ENCODE measurements at regions of chr14 and their contacts with region 1.

Region 1: GRCh38 chr14:89767861-89768268 is 186.7 kb downstream of the EFCAB11 start:
- DNase-seq: peak; percentile 43
- ATAC-seq: peak; percentile 92
- H3K4me3 ChIP-seq: no peak overlapping the region
- H3K27ac ChIP-seq: no peak overlapping the region
- H3K4me1 ChIP-seq: no peaks in the 10 kb centered on the region
- H3K27me3 ChIP-seq: peaks cover 9% of the 10 kb centered on the region; the same call in 1 of the 2 replicates
- CTCF ChIP-seq: peak; percentile 57 to 82 (median 75); a peak in 5 of 6 replicates
- POLR2A ChIP-seq: no peak
- RAD21 ChIP-seq: peak; percentile 87

Region 2: GRCh38 chr14:89237921-89238529 is 529.8 kb before region 1 on chr14:
- CTCF ChIA-PET with region 1: no interaction called
- POLR2A ChIA-PET with region 1: no interaction called
- RAD21 ChIA-PET with region 1: no interaction called
- intact Hi-C with region 1: loop called (anchors 10 kb)
- DNase-seq: no peak
- ATAC-seq: peak; percentile 73
- H3K4me3 ChIP-seq: no peak overlapping the region
- H3K27ac ChIP-seq: no peak overlapping the region
- H3K4me1 ChIP-seq: no peaks in the 10 kb centered on the region
- H3K27me3 ChIP-seq: no peaks in the 10 kb centered on the region
- CTCF ChIP-seq: peak; percentile 23 to 46 (median 41); a peak in 4 of 6 replicates
- POLR2A ChIP-seq: no peak
- RAD21 ChIP-seq: peak; percentile 52

Region 3: DNA sequence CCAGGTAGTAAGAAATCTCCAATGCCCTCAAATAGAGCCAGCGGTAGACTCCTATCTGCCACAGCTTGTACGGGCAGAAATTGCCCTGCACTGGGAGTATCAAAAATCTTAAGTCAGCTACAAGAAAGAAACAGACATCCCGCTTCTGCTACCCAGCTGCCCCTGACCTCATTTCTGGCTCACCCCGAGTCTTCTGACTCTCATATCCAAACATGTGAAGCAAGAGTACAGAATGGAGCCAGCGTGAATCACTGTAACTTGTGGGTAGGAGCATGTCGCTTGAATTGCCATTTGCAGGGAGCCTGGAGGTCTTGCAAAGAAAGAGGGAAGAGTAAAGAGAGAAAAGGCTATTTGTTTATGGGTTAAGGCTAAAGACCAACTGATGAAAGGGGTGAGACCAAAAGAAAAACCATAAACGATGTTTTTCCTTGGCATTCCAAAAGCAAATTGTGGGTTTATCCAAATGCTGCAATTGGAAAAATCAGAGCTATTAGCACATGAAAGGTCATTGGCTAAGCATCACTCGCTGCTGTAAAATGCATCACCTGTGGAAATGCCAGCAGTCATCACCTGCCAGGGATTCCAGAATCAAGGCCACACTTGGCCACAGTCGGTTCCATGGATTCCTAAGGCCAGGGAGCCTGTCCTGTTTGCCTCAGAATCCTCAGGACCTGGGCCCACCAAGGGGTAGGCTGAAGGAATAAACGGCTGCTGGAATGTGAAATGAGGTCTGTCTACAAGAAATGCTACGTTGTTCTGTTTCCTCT is 437.4 kb before region 1 on chr14:
- CTCF ChIA-PET with region 1: no interaction called
- POLR2A ChIA-PET with region 1: no interaction called
- RAD21 ChIA-PET with region 1: no interaction called
- intact Hi-C with region 1: loop called (anchors 10 kb)
- DNase-seq: no peak
- ATAC-seq: no peak
- H3K4me3 ChIP-seq: no peak overlapping the region
- H3K27ac ChIP-seq: no peak overlapping the region
- H3K4me1 ChIP-seq: no peaks in the 10 kb centered on the region
- H3K27me3 ChIP-seq: no peaks in the 10 kb centered on the region
- CTCF ChIP-seq: no peak
- POLR2A ChIP-seq: no peak
- RAD21 ChIP-seq: no peak

Region 4: DNA sequence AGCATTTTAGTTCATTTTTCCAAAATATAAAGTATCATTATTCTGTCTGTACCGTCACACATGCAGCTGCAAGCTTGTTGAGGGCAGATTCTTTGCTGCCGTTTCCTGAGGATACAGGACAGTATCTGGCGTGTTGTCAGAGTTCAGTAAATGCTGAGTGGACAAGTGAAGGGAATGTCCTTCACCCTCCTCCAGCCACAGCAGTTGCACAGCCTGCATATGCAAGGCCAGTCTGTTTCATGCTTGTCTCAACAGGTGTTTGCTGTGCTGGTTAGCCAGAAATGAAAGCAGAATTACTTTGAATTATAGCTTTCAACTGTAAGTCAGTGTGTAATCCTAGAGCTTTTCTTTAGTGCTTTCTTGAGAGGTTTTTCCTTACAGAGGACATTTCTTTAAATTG is 224.4 kb after region 1 on chr14:
- CTCF ChIA-PET with region 1: no interaction called
- POLR2A ChIA-PET with region 1: no interaction called
- RAD21 ChIA-PET with region 1: no interaction called
- intact Hi-C with region 1: no loop called
- DNase-seq: no peak
- ATAC-seq: no peak
- H3K4me3 ChIP-seq: no peak overlapping the region
- H3K27ac ChIP-seq: no peak overlapping the region
- H3K4me1 ChIP-seq: no peaks in the 10 kb centered on the region
- H3K27me3 ChIP-seq: no peaks in the 10 kb centered on the region
- CTCF ChIP-seq: no peak
- POLR2A ChIP-seq: no peak
- RAD21 ChIP-seq: no peak

Region 5: DNA sequence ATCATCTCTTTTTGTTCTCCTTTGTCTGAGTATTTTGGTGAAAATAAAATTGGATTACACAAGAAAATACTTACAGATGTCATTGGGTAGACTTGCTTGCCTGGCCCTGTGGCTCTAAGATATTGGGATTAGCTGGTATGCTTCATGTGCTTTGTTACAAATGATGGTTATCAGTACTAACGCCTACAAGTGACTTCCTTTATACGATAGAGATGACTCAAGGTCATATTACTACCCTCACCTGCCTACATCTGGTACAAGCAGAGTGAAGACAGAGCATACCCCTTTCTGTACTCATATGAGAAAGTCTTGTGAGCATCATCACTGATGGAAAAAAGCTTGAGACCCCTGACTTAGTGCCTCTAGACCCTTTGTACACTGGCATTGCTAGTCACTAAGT is 236.0 kb after region 1 on chr14:
- CTCF ChIA-PET with region 1: no interaction called
- POLR2A ChIA-PET with region 1: no interaction called
- RAD21 ChIA-PET with region 1: no interaction called
- intact Hi-C with region 1: no loop called
- DNase-seq: no peak
- ATAC-seq: no peak
- H3K4me3 ChIP-seq: no peak overlapping the region
- H3K27ac ChIP-seq: no peak overlapping the region
- H3K4me1 ChIP-seq: no peaks in the 10 kb centered on the region
- H3K27me3 ChIP-seq: no peaks in the 10 kb centered on the region
- CTCF ChIP-seq: no peak
- POLR2A ChIP-seq: no peak
- RAD21 ChIP-seq: no peak

Measured in HCT116 (cell line).